ENCODE measurements at regions of chr3 and their contacts with region 1.

Region 1: GRCh38 chr3:52339612-52340011 is 23.5 kb downstream of the DNAH1 start:
- DNase-seq: peak; percentile 74
- H3K4me3 ChIP-seq: no peak overlapping the region
- H3K27ac ChIP-seq: no peak overlapping the region
- H3K4me1 ChIP-seq: no peaks in the 10 kb centered on the region
- H3K27me3 ChIP-seq: no peaks in the 10 kb centered on the region
- CTCF ChIP-seq: peak; percentile 48 to 50
- POLR2A ChIP-seq: no peak

Region 2: GRCh38 chr3:52238761-52239701 is 100.6 kb before region 1 on chr3 and contains the start of gene TWF2:
- CTCF ChIA-PET with region 1: interaction called, 46 read pairs
- POLR2A ChIA-PET with region 1: no interaction called
- dilution Hi-C with region 1: no loop called
- intact Hi-C with region 1: loop called (anchors 2 kb)
- DNase-seq: peak; percentile 82
- H3K4me3 ChIP-seq: peak within 1 kb of the TSS; percentile 20 to 98 (median 66)
- H3K27ac ChIP-seq: peak within 1 kb of the TSS; percentile 80
- H3K4me1 ChIP-seq: peaks cover 23% of the 10 kb centered on the region
- H3K27me3 ChIP-seq: no peaks in the 10 kb centered on the region
- CTCF ChIP-seq: peak; percentile 36 to 62
- POLR2A ChIP-seq: peak; percentile 87
- total RNA-seq, gene TWF2: 82.6 and 82.9 TPM in 2 replicates

Region 3: GRCh38 chr3:52278510-52279069 is 61.0 kb before region 1 on chr3 and contains the start of gene WDR82:
- CTCF ChIA-PET with region 1: interaction called, 15 read pairs
- POLR2A ChIA-PET with region 1: no interaction called
- dilution Hi-C with region 1: no loop called
- intact Hi-C with region 1: no loop called
- DNase-seq: peak; percentile 94
- H3K4me3 ChIP-seq: peak within 1 kb of the TSS; percentile 53 to 96 (median 87)
- H3K27ac ChIP-seq: peak within 1 kb of the TSS; percentile 62
- H3K4me1 ChIP-seq: peaks cover 34% of the 10 kb centered on the region
- H3K27me3 ChIP-seq: no peaks in the 10 kb centered on the region
- CTCF ChIP-seq: peak; percentile 35 to 57
- POLR2A ChIP-seq: peak; percentile 95
- total RNA-seq, gene WDR82: 71.3 and 71.8 TPM in 2 replicates

Region 4: DNA sequence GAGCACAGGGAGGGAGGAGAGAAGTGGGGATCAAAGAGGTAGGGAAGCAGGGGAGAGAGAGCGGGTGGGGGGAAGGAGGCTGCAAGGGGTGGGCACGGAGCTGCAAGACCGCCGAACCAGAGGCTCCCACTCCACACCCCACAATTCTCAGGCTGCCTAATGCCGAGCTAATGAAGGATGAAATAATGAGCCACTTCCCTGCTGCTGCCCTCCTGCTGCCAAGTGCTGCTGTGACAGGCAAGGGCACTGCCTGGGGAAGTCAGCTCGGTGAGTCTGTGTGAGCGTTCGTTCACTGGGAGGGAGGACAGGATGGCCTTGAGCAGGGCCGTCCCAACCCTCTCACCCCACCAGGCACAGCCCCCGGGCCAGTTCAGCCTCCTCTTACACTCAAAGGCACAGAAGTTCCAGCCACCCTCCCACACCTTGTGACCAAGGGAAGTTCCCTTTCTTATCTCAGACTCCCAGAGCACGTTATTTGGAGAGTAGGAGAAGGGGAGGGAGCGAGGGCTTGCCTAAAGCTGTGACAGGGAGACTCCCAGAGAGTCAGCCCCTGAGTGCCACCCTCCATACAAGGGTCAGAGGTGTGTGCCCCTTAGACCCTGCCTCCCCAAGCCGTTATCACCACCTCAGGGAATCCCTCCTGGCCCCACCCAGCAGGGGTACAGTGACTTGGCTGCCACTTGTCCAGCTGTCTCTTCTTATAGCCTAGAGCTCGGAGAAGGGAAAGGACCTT is 39.6 kb before region 1 on chr3:
- CTCF ChIA-PET with region 1: interaction called, 107 read pairs
- POLR2A ChIA-PET with region 1: no interaction called
- dilution Hi-C with region 1: no loop called
- intact Hi-C with region 1: no loop called
- DNase-seq: peak; percentile 62
- H3K4me3 ChIP-seq: no peak overlapping the region
- H3K27ac ChIP-seq: no peak overlapping the region
- H3K4me1 ChIP-seq: peaks cover 15% of the 10 kb centered on the region
- H3K27me3 ChIP-seq: no peaks in the 10 kb centered on the region
- CTCF ChIP-seq: peak in 1 of 2 donors; percentile 24
- POLR2A ChIP-seq: no peak

Region 5: GRCh38 chr3:52532838-52533622 is 193.4 kb after region 1 on chr3:
- CTCF ChIA-PET with region 1: no interaction called
- POLR2A ChIA-PET with region 1: no interaction called
- dilution Hi-C with region 1: no loop called
- intact Hi-C with region 1: no loop called
- DNase-seq: no peak
- H3K4me3 ChIP-seq: peak overlapping the region; percentile 34 to 90 (median 71)
- H3K27ac ChIP-seq: peak overlapping the region; percentile 92
- H3K4me1 ChIP-seq: peaks cover 52% of the 10 kb centered on the region
- H3K27me3 ChIP-seq: no peaks in the 10 kb centered on the region
- CTCF ChIP-seq: no peak
- POLR2A ChIP-seq: peak; percentile 2